ENCODE measurements at regions of chr5 and their contacts with region 1.

Region 1: DNA sequence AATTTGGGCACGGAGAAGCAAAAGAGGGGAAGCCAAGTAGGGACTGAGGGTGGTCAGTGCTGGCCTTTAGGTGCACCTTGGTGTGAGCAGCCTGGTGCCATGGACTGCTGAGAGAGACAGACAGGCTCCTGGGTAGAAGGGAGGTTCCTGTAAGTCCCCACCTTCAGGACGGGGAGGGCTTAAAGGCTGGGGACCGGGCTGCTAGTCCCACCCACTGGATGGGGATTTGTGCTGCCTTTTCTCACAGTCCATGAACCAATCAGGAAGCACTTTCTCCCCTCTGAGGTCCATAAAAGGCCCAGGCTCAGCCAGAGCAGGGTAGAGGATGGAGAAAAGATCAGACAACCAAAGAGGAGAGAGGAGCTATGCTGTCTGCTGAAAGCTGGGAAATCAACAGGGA is 15.2 kb downstream of the CDC25C start:
- DNase-seq: no peak
- ATAC-seq: peak; percentile 48
- H3K4me3 ChIP-seq: no peak overlapping the region
- H3K27ac ChIP-seq: no peak overlapping the region
- H3K4me1 ChIP-seq: no peaks in the 10 kb centered on the region
- H3K27me3 ChIP-seq: no peaks in the 10 kb centered on the region
- CTCF ChIP-seq: no peak
- EP300 ChIP-seq: no peak
- POLR2A ChIP-seq: no peak
- RAD21 ChIP-seq: no peak

Region 2: DNA sequence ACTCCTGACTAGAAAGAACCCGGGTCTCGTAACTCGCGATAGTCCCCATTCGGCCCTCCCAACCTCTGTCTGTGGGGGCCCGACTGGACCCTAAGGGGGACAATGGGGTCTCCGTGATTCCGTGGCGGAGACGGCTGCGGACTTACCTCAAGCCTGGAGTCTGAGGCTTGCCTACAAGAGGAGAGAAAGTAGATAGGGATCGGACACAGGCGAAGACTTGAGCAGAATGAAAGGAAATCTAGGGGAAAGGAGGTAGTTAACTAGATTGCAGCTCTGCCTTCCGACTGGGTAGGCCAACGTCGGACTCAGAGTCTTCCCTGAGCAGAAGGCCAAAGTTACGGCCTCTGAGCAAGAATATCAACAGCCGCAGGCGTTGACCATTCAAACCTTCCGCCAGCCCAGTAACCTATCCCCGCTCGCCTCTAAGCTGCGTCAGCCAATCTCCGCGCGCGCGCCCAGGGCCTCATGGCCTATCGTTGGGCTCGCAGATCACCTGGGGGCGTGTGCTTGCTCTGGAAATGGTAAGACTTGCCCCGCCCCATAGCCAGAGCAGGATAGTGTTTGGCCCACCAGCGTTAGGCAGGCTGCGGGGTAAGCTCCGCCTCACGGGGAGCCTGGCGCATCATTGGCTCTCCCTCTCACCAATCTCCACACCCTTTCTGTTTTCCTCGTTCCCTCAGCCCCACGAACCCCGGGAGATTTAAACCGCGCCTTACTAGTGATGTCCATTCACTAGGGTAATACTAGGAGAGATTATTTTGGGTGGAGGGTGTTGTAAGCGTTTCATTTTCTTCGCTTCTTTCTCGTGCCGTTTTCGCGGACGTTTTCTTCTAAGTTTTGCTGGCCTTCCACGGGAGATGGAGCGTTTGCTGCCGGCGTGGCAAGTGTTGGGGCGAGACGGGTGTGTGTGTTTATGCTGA is 15.4 kb after region 1 on chr5 and contains the start of gene CDC25C:
- CTCF ChIA-PET with region 1: no interaction called
- POLR2A ChIA-PET with region 1: interaction called, 31 read pairs
- in situ Hi-C with region 1: no loop called
- intact Hi-C with region 1: no loop called
- DNase-seq: peak; percentile 95 to 99 (median 96)
- ATAC-seq: peak; percentile 99
- H3K4me3 ChIP-seq: peak within 1 kb of the TSS; percentile 64
- H3K27ac ChIP-seq: peak within 1 kb of the TSS; percentile 89
- H3K4me1 ChIP-seq: peaks cover 4 to 15% of the 10 kb centered on the region in 2 experiments; a peak in 4 of 5 replicates
- H3K27me3 ChIP-seq: no peaks in the 10 kb centered on the region
- CTCF ChIP-seq: no peak
- EP300 ChIP-seq: peak; percentile 36
- POLR2A ChIP-seq: peak; percentile 95
- RAD21 ChIP-seq: 0 out of 4 replicates have a peak, but pooled peaks of 1 of the 2 experiments have one; percentile 2
- polyA plus RNA-seq, gene CDC25C: 32.2 to 50.4 TPM

Region 3: DNA sequence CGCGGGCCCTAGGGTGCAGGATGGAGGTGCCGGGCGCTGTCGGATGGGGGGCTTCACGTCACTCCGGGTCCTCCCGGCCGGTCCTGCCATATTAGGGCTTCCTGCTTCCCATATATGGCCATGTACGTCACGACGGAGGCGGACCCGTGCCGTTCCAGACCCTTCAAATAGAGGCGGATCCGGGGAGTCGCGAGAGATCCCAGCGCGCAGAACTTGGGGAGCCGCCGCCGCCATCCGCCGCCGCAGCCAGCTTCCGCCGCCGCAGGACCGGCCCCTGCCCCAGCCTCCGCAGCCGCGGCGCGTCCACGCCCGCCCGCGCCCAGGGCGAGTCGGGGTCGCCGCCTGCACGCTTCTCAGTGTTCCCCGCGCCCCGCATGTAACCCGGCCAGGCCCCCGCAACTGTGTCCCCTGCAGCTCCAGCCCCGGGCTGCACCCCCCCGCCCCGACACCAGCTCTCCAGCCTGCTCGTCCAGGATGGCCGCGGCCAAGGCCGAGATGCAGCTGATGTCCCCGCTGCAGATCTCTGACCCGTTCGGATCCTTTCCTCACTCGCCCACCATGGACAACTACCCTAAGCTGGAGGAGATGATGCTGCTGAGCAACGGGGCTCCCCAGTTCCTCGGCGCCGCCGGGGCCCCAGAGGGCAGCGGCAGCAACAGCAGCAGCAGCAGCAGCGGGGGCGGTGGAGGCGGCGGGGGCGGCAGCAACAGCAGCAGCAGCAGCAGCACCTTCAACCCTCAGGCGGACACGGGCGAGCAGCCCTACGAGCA is 149.1 kb after region 1 on chr5 and contains the start of gene EGR1:
- CTCF ChIA-PET with region 1: no interaction called
- POLR2A ChIA-PET with region 1: no interaction called
- in situ Hi-C with region 1: no loop called
- intact Hi-C with region 1: no loop called
- DNase-seq: peak; percentile 78 to 94 (median 82)
- ATAC-seq: peak; percentile 59
- H3K4me3 ChIP-seq: peak within 1 kb of the TSS; percentile 90
- H3K27ac ChIP-seq: peak within 1 kb of the TSS; percentile 91
- H3K4me1 ChIP-seq: peaks cover 16 to 49% of the 10 kb centered on the region in 2 experiments
- H3K27me3 ChIP-seq: no peaks in the 10 kb centered on the region
- CTCF ChIP-seq: peak in 1 of 3 experiments; percentile 22; a peak in 2 of 6 replicates
- EP300 ChIP-seq: no peak
- POLR2A ChIP-seq: peak; percentile 99
- RAD21 ChIP-seq: no peak
- polyA plus RNA-seq, gene EGR1: 21.5 to 43.6 TPM

Region 4: GRCh38 chr5:138503487-138504270 is 187.3 kb after region 1 on chr5:
- CTCF ChIA-PET with region 1: no interaction called
- POLR2A ChIA-PET with region 1: no interaction called
- in situ Hi-C with region 1: no loop called
- intact Hi-C with region 1: no loop called
- DNase-seq: peak; percentile 74 to 80 (median 77)
- ATAC-seq: peak; percentile 81
- H3K4me3 ChIP-seq: no peak overlapping the region
- H3K27ac ChIP-seq: no peak overlapping the region
- H3K4me1 ChIP-seq: peaks cover 0 to 2% of the 10 kb centered on the region in 2 experiments; a peak in 1 of 5 replicates
- H3K27me3 ChIP-seq: no peaks in the 10 kb centered on the region
- CTCF ChIP-seq: peak; percentile 86 to 89 (median 88)
- EP300 ChIP-seq: no peak
- POLR2A ChIP-seq: no peak
- RAD21 ChIP-seq: peak; percentile 98

Measured in K562 (cell line).